ENCODE measurements at regions of chr12 and their contacts with region 1.

Region 1: GRCh38 chr12:48286665-48287064 is 64.1 kb downstream of the ZNF641 start:
- DNase-seq: peak; percentile 18
- H3K4me3 Mint-ChIP-seq: no peak overlapping the region
- H3K27ac Mint-ChIP-seq: peak overlapping the region; percentile 62
- H3K4me1 Mint-ChIP-seq: peaks cover 16% of the 10 kb centered on the region
- H3K27me3 Mint-ChIP-seq: no peaks in the 10 kb centered on the region

Region 2: DNA sequence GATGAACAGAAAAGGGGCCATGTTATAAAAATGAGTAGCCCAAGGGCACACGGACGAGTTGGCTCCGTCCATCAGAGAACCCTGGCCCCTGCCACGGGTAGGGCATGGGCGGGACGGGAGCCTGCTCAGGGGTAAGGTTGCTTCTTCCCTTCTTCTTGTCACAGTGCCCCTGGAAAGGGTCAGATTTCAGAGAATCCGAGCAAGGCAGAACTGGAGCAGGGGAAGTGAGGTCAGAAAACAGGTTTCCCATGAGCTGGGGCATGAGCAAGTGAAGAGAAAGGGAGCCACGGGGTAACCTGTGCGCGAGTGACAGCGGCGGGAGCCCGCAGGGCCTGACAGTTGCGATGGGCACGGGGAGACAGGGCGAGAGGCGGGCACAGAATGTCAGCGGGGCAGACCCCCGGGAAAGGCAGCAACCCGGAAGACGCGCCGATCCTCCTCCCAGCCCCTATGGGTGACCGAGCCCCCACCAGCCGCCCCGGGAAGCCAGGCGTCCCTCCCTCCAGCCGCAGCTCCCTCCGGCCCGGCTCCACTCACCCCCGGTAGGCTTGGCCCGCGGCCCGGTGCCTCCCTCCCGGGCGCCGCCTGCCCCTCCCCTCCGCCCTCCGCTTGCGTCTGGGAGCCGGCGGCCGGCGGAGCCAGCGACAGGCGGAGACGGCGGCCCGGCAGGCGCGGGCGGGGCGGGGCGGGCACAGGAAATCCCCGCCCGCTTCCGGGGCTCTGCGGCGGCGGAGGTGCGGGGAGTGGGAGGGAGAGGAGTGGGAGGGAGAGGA is 63.8 kb after region 1 on chr12 and contains the start of gene ZNF641:
- CTCF ChIA-PET with region 1: no interaction called
- intact Hi-C with region 1: loop called (anchors 10 kb)
- DNase-seq: peak; percentile 79
- H3K4me3 Mint-ChIP-seq: peak within 1 kb of the TSS; percentile 91
- H3K27ac Mint-ChIP-seq: peak within 1 kb of the TSS; percentile 81
- H3K4me1 Mint-ChIP-seq: peaks cover 24% of the 10 kb centered on the region
- H3K27me3 Mint-ChIP-seq: no peaks in the 10 kb centered on the region
- total RNA-seq, gene ZNF641: 3.5 to 6.0 TPM

Region 3: DNA sequence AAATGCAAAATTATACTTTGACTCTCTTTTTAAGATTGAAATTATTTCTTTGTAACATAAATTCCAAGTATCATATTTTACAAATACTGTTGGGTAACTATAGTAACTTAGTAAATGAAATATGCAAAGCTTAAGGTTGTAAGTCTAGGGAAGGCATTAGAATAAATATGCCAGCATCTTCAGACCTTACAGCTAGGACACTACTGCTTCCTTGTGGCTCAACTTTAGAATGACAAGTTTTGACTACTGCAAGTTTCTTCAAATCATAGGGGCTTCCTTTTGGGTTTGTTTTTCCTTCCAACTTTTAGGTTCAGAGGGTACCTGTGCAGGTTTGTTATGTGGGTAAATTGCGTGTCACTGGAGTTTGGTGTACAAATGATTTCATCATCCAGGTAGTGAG is 168.0 kb after region 1 on chr12:
- CTCF ChIA-PET with region 1: interaction called, 3 read pairs
- intact Hi-C with region 1: loop called (anchors 1 kb)
- DNase-seq: peak; percentile 7
- H3K4me3 Mint-ChIP-seq: no peak overlapping the region
- H3K27ac Mint-ChIP-seq: no peak overlapping the region
- H3K4me1 Mint-ChIP-seq: no peaks in the 10 kb centered on the region
- H3K27me3 Mint-ChIP-seq: peaks cover 7% of the 10 kb centered on the region